ENCODE measurements at regions of chr12 and their contacts with region 1.

Region 1: DNA sequence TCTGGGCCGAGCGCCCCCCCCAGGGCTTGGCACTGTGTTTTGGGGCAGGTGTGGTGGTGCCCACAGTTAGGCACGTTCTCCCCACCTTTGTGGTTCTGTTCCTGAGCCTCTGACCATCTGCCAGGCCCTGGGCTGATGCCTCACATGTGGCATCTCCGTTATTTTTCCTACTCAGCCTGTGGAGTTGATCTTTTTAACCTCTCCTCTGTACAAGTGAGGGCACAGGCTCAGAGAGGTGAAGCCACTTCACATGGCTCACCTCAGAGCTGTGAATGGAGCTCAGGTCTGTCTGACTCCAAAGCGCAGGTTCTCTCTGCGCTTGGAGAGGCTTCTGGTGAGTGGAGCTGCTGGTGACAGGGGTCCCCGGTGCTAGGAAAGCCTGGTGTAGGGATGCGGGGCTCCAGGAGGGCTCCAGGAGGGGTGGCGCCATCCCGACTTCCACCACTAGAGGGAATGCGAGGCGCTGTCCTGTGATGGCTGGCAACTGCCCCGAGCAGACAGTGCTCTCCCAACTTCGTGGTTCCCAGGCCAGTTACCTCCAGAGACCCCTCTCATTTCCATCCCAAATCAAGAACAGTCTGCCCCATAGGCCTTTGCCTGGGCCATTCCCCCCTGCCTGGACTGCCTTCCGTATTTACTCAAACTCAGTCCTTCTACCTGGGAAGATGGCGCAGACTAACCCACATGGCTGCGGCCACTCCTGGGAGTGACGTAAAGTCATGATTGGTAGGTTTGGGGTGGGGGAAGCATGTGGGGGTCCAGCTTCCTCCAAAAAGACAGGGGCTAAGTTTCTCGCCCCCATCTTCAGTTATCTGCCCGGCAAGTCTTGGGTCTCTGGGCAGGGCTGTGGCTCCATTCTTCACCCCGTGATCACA is 9.9 kb downstream of the BCL7A start:
- DNase-seq: peak in 1 of 2 donors; percentile 59
- ATAC-seq: peak in 7 of 8 donors; percentile 16 to 41 (median 34)
- H3K4me3 ChIP-seq: no peak overlapping the region
- H3K27ac ChIP-seq: no peak overlapping the region
- H3K4me1 ChIP-seq: peaks cover 0 to 33% (median 20%) of the 10 kb centered on the region in 9 donors
- H3K27me3 ChIP-seq: no peaks in the 10 kb centered on the region
- CTCF ChIP-seq: peak; percentile 47 to 83 (median 66)

Region 2: DNA sequence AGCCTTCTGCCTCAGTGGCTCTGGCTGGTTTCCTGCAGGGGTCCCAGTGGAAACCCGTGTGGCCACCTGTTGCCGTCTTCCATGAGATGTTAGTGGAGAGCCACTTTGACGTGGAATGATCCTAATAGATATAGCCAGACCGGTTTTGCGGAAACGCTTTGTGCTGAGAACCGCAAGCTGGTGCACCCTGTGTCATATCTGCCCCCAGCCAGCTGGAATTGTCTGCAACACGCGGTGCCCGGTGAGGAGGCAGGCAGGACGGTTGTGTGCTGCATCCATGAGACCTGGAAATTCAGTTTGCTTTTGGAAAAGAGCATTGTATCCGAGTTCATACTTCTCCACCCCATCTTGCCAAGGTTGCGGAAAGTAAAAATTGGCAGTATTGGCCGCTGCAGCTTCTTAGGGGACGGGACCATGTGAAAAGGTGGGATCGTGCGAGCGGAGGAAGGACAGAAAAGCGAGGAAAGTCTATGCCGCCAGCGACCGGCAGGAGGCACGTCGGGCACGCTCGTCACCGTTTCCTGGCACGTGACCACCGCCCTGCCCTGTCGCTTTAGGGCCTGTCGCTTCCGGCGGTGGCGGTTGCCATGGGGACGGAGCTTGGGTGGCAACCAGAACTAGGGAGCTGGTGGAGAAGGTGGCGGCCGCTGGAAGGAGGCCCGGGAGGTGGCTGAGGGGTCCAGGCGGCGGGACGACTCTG is 113.5 kb before region 1 on chr12 and contains the start of gene CFAP251:
- intact Hi-C with region 1: loop called in 3 of 10 experiments (anchors 5 to 10 kb)
- DNase-seq: peak; percentile 90 to 96
- ATAC-seq: peak; percentile 90 to 98 (median 96)
- H3K4me3 ChIP-seq: peak within 1 kb of the TSS in 9 of 10 donors; percentile 35 to 58 (median 52)
- H3K27ac ChIP-seq: peak within 1 kb of the TSS in 7 of 10 donors; percentile 21 to 71 (median 44)
- H3K4me1 ChIP-seq: peaks cover 0 to 17% (median 5%) of the 10 kb centered on the region in 9 donors
- H3K27me3 ChIP-seq: no peaks in the 10 kb centered on the region
- CTCF ChIP-seq: peak; percentile 21 to 88 (median 67)
- total RNA-seq, gene CFAP251: 0.52 to 4.6 (median 1.9) TPM

Region 3: GRCh38 chr12:121955258-121956235 is 76.0 kb before region 1 on chr12:
- intact Hi-C with region 1: loop called in 2 of 10 experiments (anchors 10 kb)
- DNase-seq: no peak
- ATAC-seq: peak in 2 of 8 donors; percentile 22 to 42
- H3K4me3 ChIP-seq: no peak overlapping the region
- H3K27ac ChIP-seq: no peak overlapping the region
- H3K4me1 ChIP-seq: no peaks in the 10 kb centered on the region
- H3K27me3 ChIP-seq: no peaks in the 10 kb centered on the region
- CTCF ChIP-seq: peak in 8 of 9 donors; percentile 15 to 61 (median 56)

Region 4: DNA sequence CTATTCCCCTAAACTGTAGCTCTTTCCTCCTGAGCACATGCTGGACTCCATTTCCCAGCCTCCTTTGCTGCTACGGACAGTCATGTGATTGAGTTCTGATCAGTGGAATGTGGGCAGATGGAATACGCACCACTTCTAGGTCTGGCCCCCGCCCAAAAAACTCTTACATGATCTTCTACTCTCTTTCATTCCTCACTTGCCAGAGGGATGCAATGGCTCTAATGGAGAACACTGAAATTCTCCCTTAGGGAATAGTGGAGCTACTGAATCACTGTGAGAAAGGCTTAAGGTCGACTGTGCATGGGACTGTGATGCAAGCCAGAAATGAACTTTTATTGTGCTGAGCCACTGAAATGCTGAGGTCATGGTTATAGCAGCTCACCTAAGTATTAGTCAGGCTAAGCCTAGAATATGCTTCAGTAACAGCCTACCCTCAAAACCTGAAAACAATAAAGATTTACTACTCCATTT is 1539.8 kb after region 1 on chr12:
- intact Hi-C with region 1: loop called in 1 of 10 experiments (anchors 5 kb)
- DNase-seq: peak; percentile 31 to 38
- ATAC-seq: peak in 7 of 8 donors; percentile 46 to 90 (median 71)
- H3K4me3 ChIP-seq: no peak overlapping the region
- H3K27ac ChIP-seq: peak overlapping the region in 1 of 10 donors; percentile 20
- H3K4me1 ChIP-seq: peaks cover 0 to 5% (median 0%) of the 10 kb centered on the region in 9 donors
- H3K27me3 ChIP-seq: no peaks in the 10 kb centered on the region
- CTCF ChIP-seq: no peak

Measured in heart right ventricle (tissue), 16 donors.